ENCODE measurements at regions of chr14 and their contacts with region 1.

Region 1: GRCh38 chr14:96362965-96363756 is at the starts of genes ATG2B and GSKIP:
- DNase-seq: peak; percentile 90
- H3K4me3 ChIP-seq: peak within 1 kb of the TSS; percentile 80 to 97 (median 95)
- H3K27ac ChIP-seq: peak within 1 kb of the TSS; percentile 82
- H3K4me1 ChIP-seq: peaks cover 23% of the 10 kb centered on the region
- H3K27me3 ChIP-seq: no peaks in the 10 kb centered on the region
- CTCF ChIP-seq: no peak
- POLR2A ChIP-seq: peak; percentile 51
- total RNA-seq, gene ATG2B: 17.8 and 18.3 TPM in 2 replicates
- total RNA-seq, gene GSKIP: 15.9 and 20.2 TPM in 2 replicates

Region 2: GRCh38 chr14:96264853-96265252 is 98.3 kb before region 1 on chr14:
- CTCF ChIA-PET with region 1: no interaction called
- POLR2A ChIA-PET with region 1: no interaction called
- dilution Hi-C with region 1: no loop called
- intact Hi-C with region 1: no loop called
- DNase-seq: no peak
- H3K4me3 ChIP-seq: no peak overlapping the region
- H3K27ac ChIP-seq: no peak overlapping the region
- H3K4me1 ChIP-seq: no peaks in the 10 kb centered on the region
- H3K27me3 ChIP-seq: no peaks in the 10 kb centered on the region
- CTCF ChIP-seq: peak in 1 of 2 donors; percentile 42
- POLR2A ChIP-seq: no peak

Region 3: GRCh38 chr14:96297000-96297399 is 66.2 kb before region 1 on chr14:
- CTCF ChIA-PET with region 1: no interaction called
- POLR2A ChIA-PET with region 1: no interaction called
- dilution Hi-C with region 1: no loop called
- intact Hi-C with region 1: loop called (anchors 1 kb)
- DNase-seq: peak; percentile 22
- H3K4me3 ChIP-seq: no peak overlapping the region
- H3K27ac ChIP-seq: no peak overlapping the region
- H3K4me1 ChIP-seq: peaks cover 8% of the 10 kb centered on the region
- H3K27me3 ChIP-seq: no peaks in the 10 kb centered on the region
- CTCF ChIP-seq: peak; percentile 15 to 25
- POLR2A ChIP-seq: no peak

Region 4: DNA sequence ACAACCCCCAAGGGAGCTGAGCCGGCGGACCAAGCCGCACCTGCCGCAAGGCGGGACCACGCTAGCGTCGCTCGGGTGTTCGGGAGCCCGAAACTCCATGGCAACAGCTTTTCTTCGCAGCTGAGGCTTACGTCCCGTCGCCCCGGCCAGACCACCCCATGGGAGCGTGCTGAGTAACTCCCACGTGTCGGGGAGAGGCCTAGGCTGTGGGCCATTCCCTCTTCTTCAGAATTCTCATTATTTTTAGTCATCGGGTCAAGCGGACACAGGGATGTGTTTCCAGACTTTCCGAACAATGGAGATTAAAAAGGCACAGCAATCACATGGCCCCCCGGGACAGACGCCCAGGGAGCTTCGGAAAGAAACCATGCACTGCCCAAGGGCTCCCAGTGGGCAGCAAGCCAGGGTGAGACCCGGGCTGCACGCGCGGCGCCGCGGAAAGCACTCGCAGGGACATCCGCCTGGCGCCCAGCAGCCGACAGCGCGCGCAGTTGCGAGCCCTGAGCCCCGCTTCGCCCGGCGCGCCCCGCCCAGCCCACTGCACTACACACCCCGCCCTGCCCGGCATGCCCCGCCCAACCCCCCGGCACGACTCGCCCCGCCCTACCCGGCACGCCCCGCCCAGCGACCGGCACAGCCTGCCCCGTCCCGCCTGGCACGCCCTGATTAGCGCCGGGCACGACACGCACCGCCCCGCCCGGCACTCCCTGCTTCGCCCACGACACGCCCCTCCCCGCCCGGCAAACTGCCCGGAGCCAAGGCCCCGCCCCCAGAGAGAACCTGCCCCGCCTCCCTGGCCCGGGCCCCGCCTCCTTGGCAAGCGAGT is 28.3 kb after region 1 on chr14:
- CTCF ChIA-PET with region 1: interaction called, 3 read pairs
- POLR2A ChIA-PET with region 1: no interaction called
- dilution Hi-C with region 1: no loop called
- intact Hi-C with region 1: loop called (anchors 1 kb)
- DNase-seq: peak; percentile 96
- H3K4me3 ChIP-seq: peak overlapping the region; percentile 69 to 77 (median 70)
- H3K27ac ChIP-seq: peak overlapping the region; percentile 22
- H3K4me1 ChIP-seq: peaks cover 7% of the 10 kb centered on the region
- H3K27me3 ChIP-seq: no peaks in the 10 kb centered on the region
- CTCF ChIP-seq: no peak
- POLR2A ChIP-seq: peak; percentile 65

Measured in endothelial cell of umbilical vein (primary cell).